ENCODE measurements at regions of chr7 and their contacts with region 1.

Region 1: GRCh38 chr7:128455551-128456254 is at the start of gene HILPDA:
- DNase-seq: peak; percentile 91 to 94
- ATAC-seq: peak; percentile 94 to 95
- H3K4me3 ChIP-seq: peak within 1 kb of the TSS; percentile 78
- H3K27ac ChIP-seq: peak within 1 kb of the TSS; percentile 86 to 94
- H3K4me1 ChIP-seq: peaks cover 49% of the 10 kb centered on the region
- CTCF ChIP-seq: no peak
- EP300 ChIP-seq: peak in 1 of 2 experiments; percentile 24; a peak in 1 of 5 replicates
- POLR2A ChIP-seq: peak; percentile 87
- RAD21 ChIP-seq: no peak
- polyA plus RNA-seq, gene HILPDA: 94.6 and 179 TPM in 2 replicates

Region 2: GRCh38 chr7:128343554-128344430 is 111.9 kb before region 1 on chr7 and contains the start of gene RBM28:
- CTCF ChIA-PET with region 1: interaction called, 22 read pairs
- POLR2A ChIA-PET with region 1: no interaction called
- DNase-seq: peak; percentile 92 to 98
- ATAC-seq: peak; percentile 87 to 95
- H3K4me3 ChIP-seq: peak within 1 kb of the TSS; percentile 94
- H3K27ac ChIP-seq: peak within 1 kb of the TSS; percentile 89 to 94
- H3K4me1 ChIP-seq: peaks cover 20% of the 10 kb centered on the region; the same call in 2 of the 3 replicates
- CTCF ChIP-seq: no peak
- EP300 ChIP-seq: no peak
- POLR2A ChIP-seq: peak; percentile 96
- RAD21 ChIP-seq: no peak
- polyA plus RNA-seq, gene RBM28: 51.9 and 77.3 TPM in 2 replicates

Region 3: GRCh38 chr7:128398016-128398840 is 57.5 kb before region 1 on chr7:
- CTCF ChIA-PET with region 1: interaction called, 45 read pairs
- POLR2A ChIA-PET with region 1: no interaction called
- DNase-seq: peak; percentile 52 to 74
- ATAC-seq: peak; percentile 83 to 92
- H3K4me3 ChIP-seq: no peak overlapping the region
- H3K27ac ChIP-seq: no peak overlapping the region
- H3K4me1 ChIP-seq: no peaks in the 10 kb centered on the region
- CTCF ChIP-seq: peak; percentile 86
- EP300 ChIP-seq: no peak
- POLR2A ChIP-seq: no peak
- RAD21 ChIP-seq: peak; percentile 74 to 80

Region 4: DNA sequence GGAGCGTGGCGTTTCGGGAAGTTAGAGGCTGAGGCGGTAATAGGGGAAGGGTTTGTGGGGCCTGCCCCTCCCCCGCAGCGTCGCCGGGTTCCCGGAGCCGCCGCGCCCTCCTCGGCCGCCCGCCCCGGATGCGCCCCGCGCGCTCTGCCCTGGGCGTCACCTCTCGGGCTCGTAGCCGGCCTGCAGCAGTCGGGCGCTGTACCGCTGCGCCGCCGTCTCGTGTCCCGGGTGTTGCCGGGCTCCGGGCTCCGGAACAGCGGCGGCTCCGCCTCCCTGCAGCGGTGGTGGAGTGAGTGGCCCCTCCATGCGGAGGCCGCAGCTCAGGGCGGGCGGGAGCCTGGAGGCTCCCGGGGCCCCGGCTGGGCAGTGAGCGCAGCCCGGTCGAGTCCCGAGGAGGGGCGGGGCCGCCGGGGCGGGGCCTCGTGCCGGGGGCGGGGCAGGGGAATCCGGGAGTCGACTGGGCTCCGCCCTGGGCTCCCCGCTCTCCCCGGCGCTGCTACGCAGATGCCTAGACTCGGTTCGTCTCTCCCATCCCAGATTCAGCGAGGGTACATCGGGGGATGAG is 46.0 kb before region 1 on chr7 and contains the start of gene IMPDH1:
- CTCF ChIA-PET with region 1: interaction called, 25 read pairs
- POLR2A ChIA-PET with region 1: interaction called, 5 read pairs
- DNase-seq: peak; percentile 74 to 93
- ATAC-seq: peak; percentile 76 to 91
- H3K4me3 ChIP-seq: peak within 1 kb of the TSS; percentile 69
- H3K27ac ChIP-seq: peak within 1 kb of the TSS; percentile 84 to 94
- H3K4me1 ChIP-seq: peaks cover 31% of the 10 kb centered on the region
- CTCF ChIP-seq: no peak
- EP300 ChIP-seq: no peak
- POLR2A ChIP-seq: peak; percentile 83
- RAD21 ChIP-seq: no peak
- polyA plus RNA-seq, gene IMPDH1: 55.4 and 83.3 TPM in 2 replicates

Region 5: GRCh38 chr7:128415217-128415785 is 40.4 kb before region 1 on chr7:
- CTCF ChIA-PET with region 1: interaction called, 25 read pairs
- POLR2A ChIA-PET with region 1: interaction called, 5 read pairs
- DNase-seq: no peak
- ATAC-seq: no peak
- H3K4me3 ChIP-seq: no peak overlapping the region
- H3K27ac ChIP-seq: no peak overlapping the region
- H3K4me1 ChIP-seq: peaks cover 6% of the 10 kb centered on the region; the same call in 1 of the 3 replicates
- CTCF ChIP-seq: no peak
- EP300 ChIP-seq: no peak
- POLR2A ChIP-seq: no peak
- RAD21 ChIP-seq: no peak

Region 6: GRCh38 chr7:128437426-128438332 is 18.0 kb before region 1 on chr7:
- CTCF ChIA-PET with region 1: interaction called, 345 read pairs
- POLR2A ChIA-PET with region 1: interaction called, 15 read pairs
- DNase-seq: no peak
- ATAC-seq: no peak
- H3K4me3 ChIP-seq: no peak overlapping the region
- H3K27ac ChIP-seq: peak overlapping the region; percentile 43 to 87; a peak in 5 of 6 replicates
- H3K4me1 ChIP-seq: peaks cover 49% of the 10 kb centered on the region
- CTCF ChIP-seq: no peak
- EP300 ChIP-seq: no peak
- POLR2A ChIP-seq: no peak
- RAD21 ChIP-seq: no peak

Region 7: DNA sequence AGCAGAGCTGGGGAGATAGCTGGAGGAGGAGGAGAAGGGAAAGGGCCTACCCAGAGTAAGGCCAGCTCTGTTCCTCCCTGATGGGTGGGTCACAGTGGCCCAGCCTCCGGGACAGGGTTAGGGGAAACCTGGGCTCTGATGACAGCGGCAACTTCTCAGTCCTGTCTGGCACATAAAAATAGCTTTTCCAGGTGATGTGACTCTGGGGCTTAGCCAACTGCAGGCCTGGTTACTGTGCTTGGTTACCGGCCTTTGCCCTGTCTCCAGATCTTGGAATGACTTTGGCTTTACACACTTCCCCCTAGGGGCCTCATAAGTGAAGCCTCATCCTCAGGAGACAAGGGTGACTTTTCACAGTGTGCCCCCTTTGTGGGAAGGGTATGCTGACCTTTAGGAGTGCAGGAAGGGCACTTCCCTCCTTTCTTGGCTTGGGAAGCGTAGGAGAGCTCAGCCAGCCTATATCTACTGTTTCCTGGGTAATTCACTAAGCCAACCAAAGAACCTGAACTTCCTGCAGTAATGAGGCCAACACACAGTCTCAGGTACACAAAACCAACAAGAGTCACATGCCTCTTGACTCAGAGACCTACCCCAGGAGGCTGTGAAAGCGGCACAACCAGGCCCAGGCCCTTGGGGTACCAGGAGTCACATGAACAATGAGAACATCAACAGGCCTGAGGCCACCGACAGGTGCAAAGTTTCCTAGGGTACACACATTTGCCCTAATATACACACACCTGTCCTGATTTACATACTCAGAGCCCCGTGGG is 11.7 kb before region 1 on chr7:
- CTCF ChIA-PET with region 1: interaction called, 21 read pairs
- POLR2A ChIA-PET with region 1: interaction called, 4 read pairs
- DNase-seq: no peak
- ATAC-seq: peak; percentile 23 to 51; a peak in 3 of 6 replicates
- H3K4me3 ChIP-seq: no peak overlapping the region
- H3K27ac ChIP-seq: peak overlapping the region; percentile 51 to 52
- H3K4me1 ChIP-seq: peaks cover 25% of the 10 kb centered on the region
- CTCF ChIP-seq: no peak
- EP300 ChIP-seq: no peak
- POLR2A ChIP-seq: no peak
- RAD21 ChIP-seq: no peak